AG04450 (cell line): ENCODE measurements at regions of chr10 and their contacts with region 1.

Region 1: GRCh38 chr10:114821293-114821914 is at the start of gene FHIP2A:
- DNase-seq: no peak
- H3K4me3 ChIP-seq: peak within 1 kb of the TSS; percentile 79
- H3K27ac ChIP-seq: peak within 1 kb of the TSS; percentile 99
- H3K27me3 ChIP-seq: no peaks in the 10 kb centered on the region
- CTCF ChIP-seq: peak; percentile 37; the same call in 1 of the 2 replicates
- polyA plus RNA-seq, gene FHIP2A: 19.2 and 27.3 TPM in 2 replicates

Region 2: DNA sequence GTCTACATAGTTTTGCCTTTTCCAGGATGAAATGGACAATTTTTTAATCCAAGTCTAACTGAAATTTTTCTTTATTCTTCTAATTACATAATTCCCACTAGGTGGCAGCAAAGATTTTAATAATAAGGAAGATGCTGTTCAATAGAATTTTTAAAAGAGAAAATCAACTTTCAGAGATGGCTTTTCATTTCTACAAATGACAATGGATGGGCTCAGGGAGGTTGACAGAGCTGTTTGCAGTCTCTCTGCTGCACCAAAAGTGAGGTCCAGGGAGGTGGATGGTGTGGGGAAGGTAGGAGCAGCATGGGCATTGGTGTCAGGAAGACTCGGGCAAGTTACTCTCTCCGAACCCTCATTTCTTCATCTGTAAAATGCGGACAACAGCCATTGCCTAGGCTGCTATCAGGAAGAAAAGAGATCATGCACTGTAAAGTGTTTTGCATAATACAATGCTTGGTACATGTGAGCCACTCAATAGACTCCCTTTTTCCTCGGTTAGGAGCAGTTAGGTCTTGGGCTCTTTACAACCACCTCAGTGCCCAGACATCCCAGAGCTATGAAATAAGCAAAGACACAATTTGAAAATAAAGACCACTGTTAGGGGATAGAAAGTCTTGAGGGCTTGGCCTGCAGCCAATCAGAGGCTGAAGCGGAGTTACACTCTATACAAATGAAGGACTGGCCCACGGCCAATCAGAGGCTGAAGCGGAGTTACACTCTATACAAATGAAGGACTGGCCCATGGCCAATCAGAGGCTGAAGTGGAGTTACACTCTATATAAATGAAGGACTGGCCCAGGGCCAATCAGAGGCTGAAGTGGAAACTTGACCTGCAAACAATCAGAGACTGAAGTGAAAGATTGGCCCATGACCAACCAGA is 270.4 kb before region 1 on chr10:
- CTCF ChIA-PET with region 1: interaction called, 18 read pairs
- POLR2A ChIA-PET with region 1: no interaction called
- DNase-seq: no peak
- H3K4me3 ChIP-seq: peak overlapping the region; percentile 43
- H3K27ac ChIP-seq: no peak overlapping the region
- H3K27me3 ChIP-seq: peaks cover 5% of the 10 kb centered on the region
- CTCF ChIP-seq: peak; percentile 39

Region 3: GRCh38 chr10:114810926-114811325 is 10.5 kb before region 1 on chr10:
- CTCF ChIA-PET with region 1: interaction called, 12 read pairs
- POLR2A ChIA-PET with region 1: no interaction called
- DNase-seq: no peak
- H3K4me3 ChIP-seq: no peak overlapping the region
- H3K27ac ChIP-seq: no peak overlapping the region
- H3K27me3 ChIP-seq: no peaks in the 10 kb centered on the region
- CTCF ChIP-seq: no peak

Region 4: GRCh38 chr10:114869520-114869892 is 48.1 kb after region 1 on chr10:
- CTCF ChIA-PET with region 1: interaction called, 13 read pairs
- POLR2A ChIA-PET with region 1: interaction called, 4 read pairs
- DNase-seq: no peak
- H3K4me3 ChIP-seq: no peak overlapping the region
- H3K27ac ChIP-seq: no peak overlapping the region
- H3K27me3 ChIP-seq: no peaks in the 10 kb centered on the region
- CTCF ChIP-seq: no peak

Region 5: GRCh38 chr10:114970515-114970914 is 149.1 kb after region 1 on chr10:
- CTCF ChIA-PET with region 1: interaction called, 11 read pairs
- POLR2A ChIA-PET with region 1: no interaction called
- DNase-seq: no peak
- H3K4me3 ChIP-seq: no peak overlapping the region
- H3K27ac ChIP-seq: no peak overlapping the region
- H3K27me3 ChIP-seq: no peaks in the 10 kb centered on the region
- CTCF ChIP-seq: no peak